Head of caudate nucleus (tissue), 42 donors: ENCODE measurements at regions of chr11 and their contacts with region 1.

Region 1: DNA sequence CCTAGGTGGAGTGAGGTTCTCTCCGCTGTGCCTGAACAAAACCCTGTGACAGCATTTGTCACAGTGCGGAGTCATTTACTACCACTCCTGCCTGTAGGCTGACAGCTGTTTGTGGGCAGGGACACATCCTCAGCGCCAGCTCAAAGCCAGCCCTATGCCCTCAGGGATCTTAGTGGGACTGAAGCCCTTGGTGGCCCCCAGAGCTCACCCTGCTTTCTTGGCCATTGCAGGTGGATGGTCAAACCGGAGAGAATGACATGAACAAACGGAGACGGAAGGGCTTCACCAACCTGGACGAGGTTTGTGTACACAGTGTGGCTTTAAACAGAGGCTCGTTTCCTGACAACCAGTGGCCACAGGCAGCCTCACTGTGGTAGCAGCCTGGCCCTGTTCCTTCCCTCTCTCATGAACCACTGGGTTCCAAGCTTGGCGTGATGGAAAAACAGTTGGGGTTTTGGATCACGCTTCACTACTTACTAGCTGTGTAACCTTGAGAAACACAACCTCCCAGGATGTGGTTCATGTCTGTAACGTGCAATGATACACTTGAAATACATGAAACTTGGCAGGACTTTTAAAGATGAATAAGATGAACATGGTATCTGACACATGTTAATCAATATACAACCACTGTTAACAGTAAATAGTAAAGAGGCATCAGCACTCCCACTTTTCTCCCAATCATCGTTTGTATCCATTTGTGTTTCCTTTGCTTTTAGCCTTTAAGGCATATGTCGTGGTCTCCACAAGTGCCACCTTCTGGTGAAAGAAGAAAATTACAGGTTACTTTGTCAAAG is 125.8 kb downstream of the MICAL2 start:
- DNase-seq: peak in 10 of 42 donors; percentile 17 to 69 (median 42)

Region 2: DNA sequence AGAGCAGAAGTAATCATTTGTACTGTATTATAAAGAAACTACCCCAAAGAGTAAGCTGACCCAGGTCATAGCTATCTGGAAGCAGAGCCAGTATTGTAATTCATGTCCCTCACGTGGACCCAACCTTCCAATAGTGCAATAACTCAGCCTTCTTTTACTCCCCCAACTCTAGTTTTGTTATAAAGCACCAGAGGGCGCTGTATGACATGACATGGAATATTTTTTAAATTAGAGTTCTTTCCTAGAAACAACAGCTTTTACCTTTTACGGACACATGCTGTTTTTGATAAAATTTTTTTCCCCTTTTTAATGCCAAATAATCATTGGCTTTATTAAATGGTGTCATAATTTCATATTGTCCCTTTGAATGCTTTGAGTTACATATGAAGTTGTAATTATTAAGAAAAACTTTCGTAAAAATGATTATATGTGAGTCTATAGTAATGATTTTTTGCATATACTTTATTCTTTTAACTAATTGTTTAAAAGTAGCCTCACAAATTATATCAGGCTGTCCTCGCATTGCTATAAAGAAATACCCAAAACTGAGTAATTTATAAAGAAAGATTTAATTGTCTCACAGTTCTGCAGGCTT is 304.6 kb before region 1 on chr11:
- intact Hi-C with region 1: loop called (anchors 5 kb)
- DNase-seq: peak in 11 of 42 donors; percentile 8 to 62 (median 26)

Region 3: GRCh38 chr11:12052676-12053605 is 183.2 kb before region 1 on chr11:
- intact Hi-C with region 1: loop called (anchors 5 kb)
- DNase-seq: no peak

Region 4: DNA sequence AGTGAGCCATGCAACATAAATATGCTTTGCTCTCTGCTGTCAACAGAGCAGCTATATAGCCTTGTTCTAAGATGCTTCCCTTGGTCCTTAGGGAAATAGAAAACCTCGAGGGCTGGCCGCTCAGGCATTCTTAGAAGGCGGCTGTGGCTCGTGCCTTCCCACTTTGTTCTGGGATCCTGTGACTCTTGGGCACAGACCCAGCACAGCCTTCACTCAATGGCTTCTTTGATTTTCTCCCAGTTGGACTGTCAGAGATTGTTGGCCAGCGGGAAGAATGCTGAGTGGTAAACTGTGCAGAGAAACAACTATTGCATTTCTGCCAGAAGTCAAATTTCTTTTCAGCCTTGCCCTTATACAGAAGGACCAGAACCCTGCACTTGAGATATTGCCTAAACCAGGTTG is 135.3 kb before region 1 on chr11:
- intact Hi-C with region 1: loop called (anchors 10 kb)
- DNase-seq: peak; percentile 40 to 94 (median 82)

Region 5: GRCh38 chr11:12288212-12288930 is 52.2 kb after region 1 on chr11:
- intact Hi-C with region 1: no loop called
- DNase-seq: peak; percentile 71 to 94 (median 88)

Region 6: DNA sequence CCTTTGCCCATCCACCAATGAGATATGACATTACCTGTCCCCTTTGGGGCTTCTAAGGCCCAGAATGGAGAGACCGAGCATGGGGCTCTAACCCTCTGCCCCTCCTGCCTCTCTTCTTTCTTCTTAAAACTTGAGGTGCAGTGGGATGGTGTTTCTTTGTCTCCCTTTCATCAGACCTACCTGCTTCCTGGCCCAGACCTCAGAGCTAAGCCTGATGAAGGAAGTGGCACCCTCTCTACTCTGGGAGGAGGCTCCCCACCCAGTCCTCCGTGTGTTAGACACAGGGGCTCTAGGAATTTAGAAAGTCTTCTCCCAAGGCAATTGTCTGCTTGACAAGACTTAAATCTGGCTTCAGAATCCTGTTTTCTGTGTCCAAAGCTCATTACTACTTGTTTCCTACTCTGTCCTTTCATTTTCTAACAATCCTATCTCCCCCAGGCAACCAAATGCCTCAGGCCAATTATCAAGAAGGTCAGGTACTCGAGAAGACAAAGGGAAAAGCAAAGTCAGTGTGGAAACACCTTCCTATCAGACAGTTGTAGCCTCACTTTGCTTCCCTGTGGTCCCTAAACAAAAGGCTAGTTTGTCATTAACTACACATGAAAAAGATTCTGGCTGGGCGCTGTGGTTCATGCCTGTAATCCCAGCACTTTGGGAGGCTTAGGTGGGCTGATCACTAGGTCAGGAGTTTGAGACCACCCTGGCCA is 121.0 kb after region 1 on chr11:
- intact Hi-C with region 1: no loop called
- DNase-seq: no peak